ENCODE measurements at regions of chr7 and their contacts with region 1.

Region 1: DNA sequence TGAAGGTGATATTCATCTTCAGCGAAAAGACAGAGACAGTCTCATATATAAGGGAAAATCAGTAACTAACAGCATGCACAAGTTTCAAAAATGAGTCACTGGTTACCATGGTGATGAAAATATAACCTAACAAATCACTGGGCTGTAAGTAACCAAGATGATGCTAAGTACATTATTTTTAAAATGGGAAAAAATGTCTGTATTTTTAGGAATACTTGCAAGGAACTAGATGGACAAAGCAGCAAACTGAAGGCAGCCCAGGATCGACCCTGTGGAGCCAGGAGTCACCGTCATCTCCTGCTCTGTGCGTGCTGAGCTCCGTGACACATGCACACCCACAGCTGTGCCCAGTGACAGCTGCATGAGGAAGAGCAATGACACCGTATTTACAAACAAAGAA is 137.3 kb downstream of the ELMO1 start:
- DNase-seq: peak in 2 of 9 experiments; percentile 34 to 55
- ATAC-seq: peak; percentile 43
- H3K4me3 ChIP-seq: no peak overlapping the region
- H3K4me3 Mint-ChIP-seq: no peak overlapping the region
- H3K27ac ChIP-seq: peak overlapping the region; percentile 48 to 49
- H3K27ac Mint-ChIP-seq: peak overlapping the region; percentile 91
- H3K4me1 ChIP-seq: peaks cover 45% of the 10 kb centered on the region
- H3K4me1 Mint-ChIP-seq: peaks cover 67% of the 10 kb centered on the region
- H3K27me3 ChIP-seq: no peaks in the 10 kb centered on the region
- H3K27me3 Mint-ChIP-seq: no peaks in the 10 kb centered on the region
- CTCF ChIP-seq: no peak

Region 2: DNA sequence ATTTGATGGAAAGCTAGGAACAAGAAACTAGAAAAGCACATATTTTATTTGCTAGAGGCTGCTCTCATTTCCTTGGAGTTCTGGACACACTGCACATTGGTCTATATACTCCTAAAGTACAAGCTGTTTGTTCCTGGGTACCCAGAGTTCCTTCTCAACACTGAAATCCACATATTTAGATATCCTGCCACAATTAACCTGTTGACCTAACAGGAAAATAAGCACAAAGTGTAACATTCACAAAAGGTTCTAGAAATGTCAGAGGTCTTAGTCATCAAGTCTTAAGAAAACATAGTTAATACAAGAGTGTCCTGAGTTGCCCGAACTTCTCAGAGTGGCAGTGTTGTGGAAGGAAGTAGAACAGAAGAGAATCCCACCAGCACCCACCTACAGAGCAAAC is 21.7 kb after region 1 on chr7:
- CTCF ChIA-PET with region 1: no interaction called
- POLR2A ChIA-PET with region 1: interaction called, 4 read pairs
- intact Hi-C with region 1: loop called in 1 of 2 experiments (anchors 2 kb)
- DNase-seq: no peak
- ATAC-seq: no peak
- H3K4me3 ChIP-seq: no peak overlapping the region
- H3K4me3 Mint-ChIP-seq: no peak overlapping the region
- H3K27ac ChIP-seq: no peak overlapping the region
- H3K27ac Mint-ChIP-seq: no peak overlapping the region
- H3K4me1 ChIP-seq: no peaks in the 10 kb centered on the region
- H3K4me1 Mint-ChIP-seq: peaks cover 70% of the 10 kb centered on the region
- H3K27me3 ChIP-seq: no peaks in the 10 kb centered on the region
- H3K27me3 Mint-ChIP-seq: no peaks in the 10 kb centered on the region
- CTCF ChIP-seq: no peak

Region 3: DNA sequence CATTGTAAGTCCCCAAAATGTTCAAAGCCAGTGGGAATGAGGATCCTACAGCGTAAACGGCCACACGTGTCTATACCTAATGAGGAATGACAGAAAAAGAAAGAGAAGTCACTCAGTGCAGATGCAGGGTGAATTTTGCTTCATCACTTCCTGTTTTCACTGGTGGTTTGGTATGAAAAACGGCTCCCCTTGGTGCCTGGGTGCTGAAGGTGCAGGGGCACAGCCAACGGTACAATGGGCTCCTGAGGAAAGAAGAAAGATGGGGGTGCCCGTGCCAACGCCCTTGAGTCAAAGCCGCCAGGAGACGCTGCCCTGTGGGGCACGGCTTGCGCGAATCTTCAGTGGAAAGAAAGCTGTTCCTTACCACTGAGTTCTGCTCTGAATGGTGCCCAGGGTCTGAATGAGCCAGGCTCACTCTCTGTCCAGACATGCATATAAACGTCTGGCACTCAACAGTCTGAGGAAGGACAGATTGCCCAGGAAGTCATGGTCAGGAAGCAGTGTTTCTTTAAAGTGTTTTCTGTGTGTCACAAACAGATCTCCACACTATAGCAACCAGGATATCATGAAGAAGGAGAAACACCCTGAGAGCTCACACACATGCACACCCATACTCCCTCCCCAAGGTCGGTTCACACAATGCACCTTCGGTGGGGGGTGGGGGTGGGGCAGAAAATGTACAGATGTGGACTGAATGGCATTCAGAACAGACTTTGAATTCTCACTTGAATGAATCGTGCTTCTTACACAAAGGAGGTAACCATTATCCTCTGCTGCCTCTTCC is 31.5 kb after region 1 on chr7:
- CTCF ChIA-PET with region 1: interaction called, 4 read pairs
- POLR2A ChIA-PET with region 1: interaction called, 4 read pairs
- intact Hi-C with region 1: loop called in 1 of 2 experiments (anchors 2 kb)
- DNase-seq: peak; percentile 48 to 87 (median 73)
- ATAC-seq: peak; percentile 91
- H3K4me3 ChIP-seq: peak overlapping the region; percentile 53 to 64
- H3K4me3 Mint-ChIP-seq: peak overlapping the region; percentile 93
- H3K27ac ChIP-seq: peak overlapping the region; percentile 69 to 72
- H3K27ac Mint-ChIP-seq: peak overlapping the region; percentile 97
- H3K4me1 ChIP-seq: peaks cover 39% of the 10 kb centered on the region
- H3K4me1 Mint-ChIP-seq: peaks cover 69% of the 10 kb centered on the region
- H3K27me3 ChIP-seq: no peaks in the 10 kb centered on the region
- H3K27me3 Mint-ChIP-seq: no peaks in the 10 kb centered on the region
- CTCF ChIP-seq: peak; percentile 43

Measured in CD8-positive, alpha-beta T cell (primary cell).